ENCODE measurements at regions of chr4 and their contacts with region 1.

Region 1: GRCh38 chr4:155687380-155687982 is 20.8 kb downstream of the GUCY1A1 start:
- DNase-seq: no peak
- ATAC-seq: no peak
- H3K4me3 ChIP-seq: no peak overlapping the region
- H3K27ac ChIP-seq: no peak overlapping the region
- H3K4me1 ChIP-seq: no peaks in the 10 kb centered on the region
- H3K27me3 ChIP-seq: no peaks in the 10 kb centered on the region
- CTCF ChIP-seq: no peak
- EP300 ChIP-seq: no peak
- POLR2A ChIP-seq: no peak
- RAD21 ChIP-seq: no peak

Region 2: GRCh38 chr4:155578726-155579370 is 108.6 kb before region 1 on chr4:
- CTCF ChIA-PET with region 1: no interaction called
- POLR2A ChIA-PET with region 1: no interaction called
- RAD21 ChIA-PET with region 1: no interaction called
- SMC1A ChIA-PET with region 1: no interaction called
- in situ Hi-C with region 1: no loop called
- intact Hi-C with region 1: no loop called
- DNase-seq: no peak
- ATAC-seq: no peak
- H3K4me3 ChIP-seq: no peak overlapping the region
- H3K27ac ChIP-seq: no peak overlapping the region
- H3K4me1 ChIP-seq: no peaks in the 10 kb centered on the region
- H3K27me3 ChIP-seq: no peaks in the 10 kb centered on the region
- CTCF ChIP-seq: no peak
- EP300 ChIP-seq: no peak
- POLR2A ChIP-seq: no peak
- RAD21 ChIP-seq: no peak

Region 3: GRCh38 chr4:155675709-155676429 is 11.6 kb before region 1 on chr4:
- CTCF ChIA-PET with region 1: interaction called, 9 read pairs
- POLR2A ChIA-PET with region 1: interaction called, 11 read pairs
- RAD21 ChIA-PET with region 1: interaction called, 10 read pairs
- SMC1A ChIA-PET with region 1: interaction called, 52 read pairs
- in situ Hi-C with region 1: no loop called
- intact Hi-C with region 1: no loop called
- DNase-seq: no peak
- ATAC-seq: peak; percentile 86
- H3K4me3 ChIP-seq: no peak overlapping the region
- H3K27ac ChIP-seq: no peak overlapping the region
- H3K4me1 ChIP-seq: no peaks in the 10 kb centered on the region
- H3K27me3 ChIP-seq: no peaks in the 10 kb centered on the region
- CTCF ChIP-seq: no peak
- EP300 ChIP-seq: no peak
- POLR2A ChIP-seq: no peak
- RAD21 ChIP-seq: no peak

Region 4: GRCh38 chr4:155809835-155810234 is 122.4 kb after region 1 on chr4:
- CTCF ChIA-PET with region 1: no interaction called
- POLR2A ChIA-PET with region 1: no interaction called
- RAD21 ChIA-PET with region 1: no interaction called
- SMC1A ChIA-PET with region 1: no interaction called
- in situ Hi-C with region 1: no loop called
- intact Hi-C with region 1: no loop called
- DNase-seq: peak; percentile 55
- ATAC-seq: peak; percentile 99
- H3K4me3 ChIP-seq: no peak overlapping the region
- H3K27ac ChIP-seq: no peak overlapping the region
- H3K4me1 ChIP-seq: no peaks in the 10 kb centered on the region
- H3K27me3 ChIP-seq: no peaks in the 10 kb centered on the region
- CTCF ChIP-seq: peak; percentile 40 to 69 (median 54); a peak in 5 of 6 replicates
- EP300 ChIP-seq: no peak
- POLR2A ChIP-seq: no peak
- RAD21 ChIP-seq: peak; percentile 81

Measured in GM12878 (cell line).